Left ventricle myocardium inferior (tissue), 1 donor: ENCODE measurements at regions of chr19 and their contacts with region 1.

Region 1: DNA sequence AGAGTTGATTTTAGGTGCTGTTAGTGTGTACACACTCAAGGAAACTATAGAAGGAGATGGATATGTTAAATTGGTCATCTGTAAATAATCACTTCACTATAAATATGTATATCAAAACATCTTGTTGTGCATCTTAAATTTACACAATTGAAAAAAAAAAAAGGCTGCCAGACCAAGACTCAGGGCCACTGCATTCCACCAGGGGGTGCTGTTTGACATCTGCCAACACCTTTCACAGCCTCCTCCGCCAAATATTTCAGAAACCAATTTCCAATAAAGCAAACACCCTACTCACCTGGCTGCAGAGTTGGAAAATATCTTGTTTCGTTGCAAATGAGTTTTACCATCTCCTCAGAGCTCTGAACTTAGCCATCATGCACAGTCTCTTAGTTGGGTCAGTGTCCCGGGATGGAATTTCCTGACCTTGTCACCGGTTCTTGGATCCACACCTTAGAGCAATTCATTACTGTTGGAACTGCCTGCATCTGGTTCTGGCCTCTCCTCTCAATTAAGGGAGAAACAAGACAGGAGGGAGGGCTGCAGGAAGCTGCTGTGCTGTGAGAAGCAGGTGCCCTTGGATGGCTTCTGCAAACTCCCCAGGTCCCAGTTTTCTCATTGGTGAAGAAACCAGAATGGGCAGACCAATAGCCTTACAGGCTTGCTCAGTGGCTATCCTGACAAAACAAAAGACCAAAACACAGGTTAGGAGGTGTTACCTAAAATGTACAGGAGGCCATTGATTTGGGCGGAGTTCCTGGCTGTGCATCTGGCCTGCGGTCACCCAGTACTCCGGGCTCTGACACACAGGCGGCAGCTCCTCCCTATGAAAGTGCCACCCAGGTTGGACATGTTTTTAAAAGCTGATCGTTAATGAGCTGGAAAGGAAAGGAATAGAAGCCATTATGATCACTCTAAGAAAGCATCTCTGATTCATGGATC is 746.6 kb downstream of the UQCRFS1 start:
- DNase-seq: peak; percentile 53
- H3K4me3 ChIP-seq: no peak overlapping the region
- H3K27ac ChIP-seq: no peak overlapping the region
- H3K4me1 ChIP-seq: no peaks in the 10 kb centered on the region
- H3K27me3 ChIP-seq: peaks cover 85% of the 10 kb centered on the region
- CTCF ChIP-seq: peak; percentile 85

Region 2: DNA sequence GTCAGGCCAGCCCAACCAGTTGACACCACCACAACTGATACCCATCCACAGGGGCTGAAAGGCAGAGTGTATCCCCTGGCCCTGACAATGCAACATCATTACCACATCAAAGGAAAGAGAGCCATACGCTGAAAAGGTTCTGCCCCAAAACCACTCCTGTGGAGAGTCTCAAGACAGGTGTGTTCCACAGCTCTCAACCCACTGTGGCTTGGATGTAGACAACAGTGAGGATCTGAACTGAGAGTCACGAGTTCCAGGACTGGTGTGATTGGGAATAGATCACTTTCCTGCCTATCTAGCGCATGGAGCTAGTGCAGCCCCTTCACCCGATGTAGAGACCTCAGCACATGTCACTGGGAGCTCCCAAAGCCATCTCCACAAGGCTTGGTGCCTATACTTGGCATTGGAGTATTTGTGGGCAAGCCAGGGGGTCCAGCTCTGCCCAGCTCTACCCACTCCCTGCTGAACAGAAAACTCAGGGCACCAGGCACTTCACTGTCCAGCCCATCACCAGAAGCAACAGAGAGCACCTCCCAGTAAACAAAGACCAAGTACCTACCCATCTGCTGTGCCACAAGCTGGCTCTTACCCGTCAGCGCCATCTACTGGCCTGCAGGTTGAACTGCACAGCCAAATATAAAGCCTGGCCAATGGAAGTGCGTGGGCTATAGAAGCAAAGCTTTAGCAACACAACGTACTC is 167.1 kb after region 1 on chr19:
- intact Hi-C with region 1: loop called (anchors 5 kb)
- DNase-seq: no peak
- H3K4me3 ChIP-seq: no peak overlapping the region
- H3K27ac ChIP-seq: no peak overlapping the region
- H3K4me1 ChIP-seq: no peaks in the 10 kb centered on the region
- H3K27me3 ChIP-seq: peaks cover 26% of the 10 kb centered on the region
- CTCF ChIP-seq: peak; percentile 77

Region 3: DNA sequence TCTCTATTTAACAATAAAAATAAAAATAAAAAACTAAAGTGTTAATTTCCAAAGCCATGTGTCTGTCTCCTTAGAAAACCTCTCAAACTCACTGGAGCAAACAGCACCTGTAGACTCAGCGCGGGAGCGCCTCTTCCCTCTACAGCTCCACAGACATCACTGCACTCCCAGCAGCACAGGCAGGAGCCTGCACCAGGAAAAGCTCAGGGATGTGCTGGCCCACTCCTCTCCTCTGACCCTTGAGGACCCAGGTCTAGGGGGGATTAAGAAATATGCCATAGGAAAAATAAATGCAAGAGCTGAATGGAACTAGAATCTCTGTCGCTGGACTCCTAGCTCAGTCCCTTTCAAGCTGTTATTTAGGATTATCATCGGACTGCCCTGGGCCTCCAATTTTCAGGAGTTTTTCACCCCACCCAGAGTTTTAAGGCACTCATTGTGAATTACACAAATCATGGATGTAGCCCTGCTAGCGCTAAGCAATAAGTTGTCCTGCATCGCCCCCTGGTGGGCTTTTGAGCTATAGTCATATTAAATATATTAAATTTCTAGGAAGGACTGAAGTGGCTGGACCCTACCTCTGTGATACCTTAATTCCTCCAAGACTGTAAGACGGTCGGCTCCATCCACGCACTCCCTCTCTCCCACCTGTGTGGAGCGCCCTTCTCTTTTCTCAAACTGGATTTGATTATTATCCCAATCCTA is 412.6 kb after region 1 on chr19:
- intact Hi-C with region 1: loop called (anchors 10 kb)
- DNase-seq: peak; percentile 46
- H3K4me3 ChIP-seq: no peak overlapping the region
- H3K27ac ChIP-seq: no peak overlapping the region
- H3K4me1 ChIP-seq: peaks cover 24% of the 10 kb centered on the region
- H3K27me3 ChIP-seq: no peaks in the 10 kb centered on the region
- CTCF ChIP-seq: peak; percentile 71